ENCODE measurements at regions of chr17 and their contacts with region 1.

Region 1: GRCh38 chr17:8189711-8190477 is at the start of gene BORCS6:
- DNase-seq: peak; percentile 98 to 99
- H3K4me3 ChIP-seq: peak within 1 kb of the TSS; percentile 93
- H3K4me1 ChIP-seq: peaks cover 21% of the 10 kb centered on the region
- H3K27me3 ChIP-seq: no peaks in the 10 kb centered on the region

Region 2: DNA sequence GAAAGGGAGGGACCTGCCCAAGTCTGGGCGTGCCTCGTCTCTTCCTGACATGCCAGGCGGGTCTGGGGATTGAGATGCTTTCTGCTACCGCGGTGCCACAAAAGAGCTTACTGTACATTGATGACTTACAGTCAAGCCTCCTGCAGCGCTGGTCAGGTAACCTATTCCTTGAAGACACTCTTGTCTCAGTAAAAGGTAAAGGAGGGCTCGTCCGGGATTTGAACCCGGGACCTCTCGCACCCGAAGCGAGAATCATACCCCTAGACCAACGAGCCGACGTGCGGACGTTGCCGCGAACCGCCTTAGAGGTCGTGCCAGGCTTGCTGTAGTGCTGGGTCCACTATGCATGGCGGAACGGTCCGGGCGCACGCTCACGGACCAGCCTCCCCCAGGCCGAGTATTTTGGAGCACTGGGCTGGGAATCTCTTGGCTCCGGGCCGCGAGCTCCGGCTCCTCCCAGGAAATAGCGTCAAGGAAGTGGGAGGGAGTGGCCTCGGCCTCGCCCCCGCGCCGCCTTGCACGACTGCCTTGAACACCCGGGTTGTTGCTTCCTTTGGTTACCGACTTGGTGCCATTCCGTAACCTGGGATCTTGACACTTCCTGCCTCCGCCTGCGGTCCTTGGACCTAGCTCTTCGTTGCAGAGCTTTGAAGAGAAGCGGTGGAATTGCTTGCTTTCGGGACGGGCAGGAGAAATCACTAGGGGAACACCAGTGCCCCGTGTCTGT is 32.9 kb after region 1 on chr17:
- in situ Hi-C with region 1: loop called (anchors 5 kb)
- DNase-seq: peak; percentile 90 to 96
- H3K4me3 ChIP-seq: peak overlapping the region; percentile 63
- H3K4me1 ChIP-seq: peaks cover 25% of the 10 kb centered on the region
- H3K27me3 ChIP-seq: no peaks in the 10 kb centered on the region

Region 3: DNA sequence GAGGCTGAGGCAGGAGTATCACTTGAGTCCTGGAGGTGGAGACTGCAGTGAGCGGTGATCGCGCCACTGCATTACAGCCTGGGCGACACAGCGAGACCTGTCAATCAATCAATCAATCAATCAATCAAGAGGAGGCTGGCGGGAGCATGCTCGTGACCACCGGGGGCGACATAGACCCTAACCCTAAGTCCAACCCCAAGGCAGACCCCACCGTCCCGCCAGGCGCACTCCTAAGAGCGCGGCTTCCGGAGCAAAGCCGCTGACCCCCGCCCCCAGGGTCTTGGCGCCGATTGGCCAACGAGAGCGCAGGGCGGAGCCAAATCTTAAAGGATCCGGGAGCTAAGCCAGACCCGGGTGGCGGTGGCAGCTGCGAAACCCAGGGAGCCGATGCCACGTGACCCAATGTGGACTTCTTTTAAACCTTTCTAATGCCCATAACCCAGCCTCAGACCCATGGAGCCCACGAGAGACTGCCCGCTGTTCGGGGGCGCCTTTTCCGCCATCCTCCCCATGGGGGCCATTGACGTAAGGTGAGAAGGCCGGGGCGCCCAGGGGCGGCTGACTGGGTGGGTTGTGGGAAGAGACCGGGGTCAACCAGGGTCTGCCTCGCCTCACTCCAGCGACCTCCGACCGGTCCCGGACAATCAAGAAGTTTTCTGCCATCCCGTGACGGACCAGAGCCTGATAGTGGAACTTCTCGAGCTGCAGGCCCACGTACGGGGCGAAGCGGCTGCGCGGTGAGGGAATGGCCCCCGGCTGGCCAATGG is 98.6 kb after region 1 on chr17 and contains the start of gene RANGRF:
- in situ Hi-C with region 1: no loop called
- DNase-seq: peak; percentile 90 to 95
- H3K4me3 ChIP-seq: peak within 1 kb of the TSS; percentile 75
- H3K4me1 ChIP-seq: peaks cover 11% of the 10 kb centered on the region
- H3K27me3 ChIP-seq: no peaks in the 10 kb centered on the region

Region 4: DNA sequence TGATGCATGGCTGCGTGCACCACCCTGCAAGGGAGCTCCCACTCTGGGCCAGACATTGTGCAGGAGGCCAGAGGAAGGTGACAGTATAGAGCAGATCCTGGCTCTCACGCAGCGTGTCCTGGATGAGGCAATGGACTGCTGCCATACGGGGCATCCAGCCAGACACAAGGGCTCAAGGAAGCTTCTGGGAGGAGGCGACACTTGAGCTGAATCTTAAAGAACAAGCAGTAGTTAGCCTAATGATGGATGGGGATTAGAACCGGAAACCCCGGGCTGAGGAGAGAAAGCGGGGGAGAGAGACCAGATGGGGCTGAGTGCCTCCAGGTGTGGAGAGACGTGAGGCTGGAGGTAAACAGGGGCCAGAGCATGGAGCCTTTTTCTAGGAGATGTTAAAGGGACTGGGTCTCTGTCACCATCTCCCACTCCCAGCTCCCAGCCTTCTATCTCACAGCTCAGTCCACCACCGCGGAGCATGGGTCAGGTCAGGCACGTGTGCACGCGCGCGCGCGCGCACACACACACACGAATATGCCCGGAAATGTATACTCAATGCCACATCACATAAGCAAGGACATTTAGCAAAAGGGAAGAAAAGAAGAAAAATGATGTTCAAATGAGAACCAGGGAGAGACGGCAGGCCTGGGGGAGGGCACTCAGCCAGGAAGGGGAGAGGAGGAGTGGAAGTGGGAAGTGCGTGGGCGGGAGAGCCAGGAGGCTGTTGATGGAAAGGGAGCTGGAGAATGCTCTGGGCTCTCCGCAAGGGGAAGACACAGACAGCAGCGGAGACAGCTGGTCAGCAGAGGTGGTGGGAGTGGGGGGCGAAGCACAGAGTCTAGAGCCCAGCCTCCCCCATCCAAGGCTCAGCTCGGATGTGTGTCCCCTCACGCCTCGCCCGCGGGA is 508.5 kb after region 1 on chr17:
- in situ Hi-C with region 1: no loop called
- DNase-seq: no peak
- H3K4me3 ChIP-seq: no peak overlapping the region
- H3K4me1 ChIP-seq: peaks cover 10% of the 10 kb centered on the region; the same call in 1 of the 2 replicates
- H3K27me3 ChIP-seq: no peaks in the 10 kb centered on the region